ENCODE measurements at regions of chr2 and their contacts with region 1.

Region 1: GRCh38 chr2:12501469-12502158 is 215.1 kb upstream of the TRIB2 start:
- DNase-seq: peak; percentile 79
- H3K4me3 Mint-ChIP-seq: peak overlapping the region; percentile 34
- H3K27ac Mint-ChIP-seq: peak overlapping the region; percentile 89
- H3K4me1 Mint-ChIP-seq: peaks cover 92% of the 10 kb centered on the region
- H3K27me3 Mint-ChIP-seq: no peaks in the 10 kb centered on the region

Region 2: GRCh38 chr2:11753886-11754699 is 747.5 kb before region 1 on chr2:
- intact Hi-C with region 1: loop called (anchors 5 kb)
- DNase-seq: peak; percentile 57
- H3K4me3 Mint-ChIP-seq: peak overlapping the region; percentile 69
- H3K27ac Mint-ChIP-seq: peak overlapping the region; percentile 82
- H3K4me1 Mint-ChIP-seq: peaks cover 85% of the 10 kb centered on the region
- H3K27me3 Mint-ChIP-seq: no peaks in the 10 kb centered on the region

Region 3: DNA sequence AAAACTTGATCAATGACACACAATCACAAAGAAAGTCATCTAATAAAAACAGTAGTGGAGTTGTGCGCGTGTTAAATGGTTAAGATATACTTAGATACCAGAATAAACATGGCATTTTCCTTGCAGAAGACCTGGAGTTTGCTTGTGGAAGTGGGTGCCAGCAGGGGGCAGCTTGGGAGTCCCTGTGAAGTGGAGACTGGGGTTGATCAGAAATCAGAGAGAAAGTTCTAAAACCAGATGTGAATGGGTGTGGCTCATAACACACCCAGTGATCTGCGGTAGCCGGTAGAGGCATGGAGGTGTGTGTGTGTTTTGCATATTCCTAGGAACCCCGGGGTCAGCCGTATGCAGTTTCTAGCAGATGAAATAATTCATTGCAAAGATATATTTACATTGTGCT is 85.0 kb before region 1 on chr2:
- intact Hi-C with region 1: loop called (anchors 5 kb)
- DNase-seq: peak; percentile 41
- H3K4me3 Mint-ChIP-seq: no peak overlapping the region
- H3K27ac Mint-ChIP-seq: no peak overlapping the region
- H3K4me1 Mint-ChIP-seq: peaks cover 65% of the 10 kb centered on the region
- H3K27me3 Mint-ChIP-seq: peaks cover 2% of the 10 kb centered on the region

Region 4: GRCh38 chr2:12456293-12457151 is 45.1 kb before region 1 on chr2:
- intact Hi-C with region 1: loop called (anchors 1 kb)
- DNase-seq: peak; percentile 40
- H3K4me3 Mint-ChIP-seq: peak overlapping the region; percentile 66
- H3K27ac Mint-ChIP-seq: peak overlapping the region; percentile 83
- H3K4me1 Mint-ChIP-seq: peaks cover 33% of the 10 kb centered on the region
- H3K27me3 Mint-ChIP-seq: no peaks in the 10 kb centered on the region

Region 5: GRCh38 chr2:12555012-12555645 is 53.5 kb after region 1 on chr2:
- intact Hi-C with region 1: loop called (anchors 1 kb)
- DNase-seq: no peak
- H3K4me3 Mint-ChIP-seq: peak overlapping the region; percentile 44
- H3K27ac Mint-ChIP-seq: peak overlapping the region; percentile 88
- H3K4me1 Mint-ChIP-seq: peaks cover 41% of the 10 kb centered on the region
- H3K27me3 Mint-ChIP-seq: no peaks in the 10 kb centered on the region

Region 6: DNA sequence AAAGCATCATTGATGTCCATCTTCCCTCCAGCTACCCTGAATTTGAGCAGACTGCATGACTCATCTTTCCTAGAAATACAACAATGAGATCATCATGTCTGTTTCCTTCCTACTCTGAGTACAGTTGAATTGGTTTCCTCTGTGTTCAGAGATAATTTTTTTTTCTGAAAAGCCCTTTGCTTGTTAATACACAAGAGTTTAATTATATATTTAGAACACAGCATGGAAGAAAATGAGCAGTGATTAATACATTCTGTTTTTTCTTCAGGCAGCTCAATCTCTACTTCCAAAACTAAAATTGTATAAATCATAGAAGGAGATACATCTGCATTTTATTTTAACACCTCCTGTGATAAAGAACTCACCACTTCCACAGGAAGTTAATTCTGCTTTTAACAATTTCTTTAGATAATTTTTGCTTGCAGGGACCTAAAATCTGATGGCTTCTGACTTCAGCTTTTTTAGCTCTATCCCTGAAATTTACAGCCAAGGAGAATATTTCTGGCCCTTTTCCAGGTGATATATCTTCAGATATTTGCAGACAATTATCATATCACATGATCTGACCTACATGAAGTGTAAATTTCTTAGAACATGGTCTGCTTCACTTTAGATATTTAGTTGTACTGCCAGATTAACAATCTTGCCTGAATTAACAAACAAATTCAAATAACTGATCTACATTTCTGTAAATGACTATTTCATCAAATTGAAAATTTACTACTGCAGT is 464.1 kb after region 1 on chr2:
- intact Hi-C with region 1: loop called (anchors 5 kb)
- DNase-seq: no peak
- H3K4me3 Mint-ChIP-seq: peak overlapping the region; percentile 12
- H3K27ac Mint-ChIP-seq: peak overlapping the region; percentile 21
- H3K4me1 Mint-ChIP-seq: peaks cover 23% of the 10 kb centered on the region
- H3K27me3 Mint-ChIP-seq: peaks cover 13% of the 10 kb centered on the region